HAP-1 (cell line): ENCODE measurements at regions of chr12 and their contacts with region 1.

Region 1: DNA sequence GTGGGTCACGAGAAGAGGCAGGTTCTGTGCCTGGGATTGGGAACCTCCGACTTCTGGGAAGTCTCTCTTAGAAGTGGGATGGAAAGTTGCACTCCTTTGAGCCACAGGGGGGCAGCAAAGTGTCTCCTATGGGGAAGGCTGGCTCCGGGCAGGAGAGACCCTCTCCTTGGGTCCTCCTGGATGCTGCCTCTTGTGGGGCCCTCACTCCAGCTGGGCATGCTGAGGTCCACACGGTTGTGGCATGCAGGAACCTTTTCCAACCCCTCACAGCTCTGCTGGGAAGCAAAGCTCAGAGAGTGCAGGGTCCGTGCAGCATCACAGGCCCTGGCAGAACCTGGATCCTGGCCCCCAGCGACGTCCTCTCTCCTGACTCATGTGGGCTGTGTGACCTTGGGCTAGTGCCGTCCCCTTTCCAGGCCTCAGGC is 17.4 kb downstream of the SDSL start:
- DNase-seq: peak; percentile 47 to 86
- H3K4me3 ChIP-seq: no peak overlapping the region
- H3K4me1 ChIP-seq: no peaks in the 10 kb centered on the region
- H3K27me3 ChIP-seq: no peaks in the 10 kb centered on the region

Region 2: DNA sequence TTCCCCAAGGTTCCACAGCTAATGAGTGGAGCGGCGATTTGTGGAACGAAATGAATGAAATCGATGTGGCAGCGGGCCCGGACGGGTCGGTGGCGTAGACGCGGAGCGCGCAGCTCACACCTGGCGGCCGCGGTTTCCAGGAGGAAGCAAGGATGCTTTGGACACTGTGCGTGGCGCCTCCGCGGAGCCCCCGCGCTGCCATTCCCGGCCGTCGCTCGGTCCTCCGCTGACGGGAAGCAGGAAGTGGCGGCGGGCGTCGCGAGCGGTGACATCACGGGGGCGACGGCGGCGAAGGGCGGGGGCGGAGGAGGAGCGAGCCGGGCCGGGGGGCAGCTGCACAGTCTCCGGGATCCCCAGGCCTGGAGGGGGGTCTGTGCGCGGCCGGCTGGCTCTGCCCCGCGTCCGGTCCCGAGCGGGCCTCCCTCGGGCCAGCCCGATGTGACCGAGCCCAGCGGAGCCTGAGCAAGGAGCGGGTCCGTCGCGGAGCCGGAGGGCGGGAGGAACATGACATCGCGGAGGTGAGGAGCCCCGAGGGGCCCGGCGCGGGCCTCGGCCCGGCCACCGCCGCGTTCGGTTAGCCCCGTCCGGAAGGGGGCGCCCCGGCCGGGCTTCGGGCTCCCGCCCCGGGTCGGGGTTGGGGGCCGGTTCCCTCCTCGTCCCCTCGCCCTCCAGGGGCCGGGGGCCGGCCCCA is 1020.9 kb before region 1 on chr12 and contains the start of gene PTPN11:
- in situ Hi-C with region 1: no loop called
- DNase-seq: peak; percentile 70 to 91
- H3K4me3 ChIP-seq: peak within 1 kb of the TSS; percentile 78
- H3K4me1 ChIP-seq: peaks cover 17% of the 10 kb centered on the region
- H3K27me3 ChIP-seq: no peaks in the 10 kb centered on the region

Region 3: DNA sequence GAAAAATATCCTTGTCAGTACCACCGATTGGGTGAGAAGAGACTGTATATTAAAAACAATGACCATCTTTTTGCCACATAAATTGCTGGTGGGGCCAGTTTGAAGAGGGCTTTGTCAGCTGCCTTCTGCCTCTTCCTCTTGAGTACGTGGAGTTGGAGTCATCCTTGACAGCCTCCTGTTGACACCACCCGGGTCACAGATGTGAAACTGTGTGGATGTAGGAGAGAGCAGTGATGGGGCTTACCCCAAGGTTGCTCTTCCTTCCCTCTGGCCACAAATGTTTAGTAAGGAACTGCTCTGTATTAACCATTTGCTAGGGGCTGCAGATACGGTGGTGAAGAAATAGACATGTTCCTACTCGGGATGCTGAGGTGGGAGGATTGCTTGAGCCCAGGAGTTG is 1008.7 kb before region 1 on chr12:
- in situ Hi-C with region 1: no loop called
- DNase-seq: no peak
- H3K4me3 ChIP-seq: no peak overlapping the region
- H3K4me1 ChIP-seq: no peaks in the 10 kb centered on the region
- H3K27me3 ChIP-seq: no peaks in the 10 kb centered on the region

Region 4: DNA sequence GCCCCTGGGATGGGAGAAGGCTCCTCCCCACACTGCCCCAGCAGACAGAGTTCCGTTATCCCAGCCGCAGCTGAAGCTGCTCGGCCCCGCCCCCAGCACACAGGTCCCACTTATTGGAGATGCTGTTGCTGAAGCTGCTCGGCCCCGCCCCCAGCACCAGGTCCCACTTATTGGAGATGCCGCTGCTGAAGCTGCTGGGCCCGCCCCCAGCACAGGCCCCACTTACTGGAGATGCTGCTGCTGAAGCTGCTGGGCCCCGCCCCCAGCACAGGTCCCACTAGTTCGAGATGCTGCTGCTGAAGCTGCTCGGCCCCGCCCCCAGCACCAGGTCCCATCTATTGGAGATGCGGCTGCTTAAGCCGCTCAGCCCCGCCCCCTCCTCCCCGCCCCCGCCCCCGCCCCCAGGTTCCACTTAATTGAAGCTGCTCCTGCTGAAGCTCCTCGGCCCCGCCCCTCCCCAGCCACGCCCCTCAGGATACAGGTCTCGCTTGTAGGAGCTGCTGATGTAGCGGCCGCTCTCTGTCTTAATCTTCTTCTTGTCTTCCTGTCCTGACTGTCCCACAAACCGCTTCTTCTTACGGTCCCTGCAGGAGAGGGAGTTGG is 278.1 kb before region 1 on chr12:
- in situ Hi-C with region 1: no loop called
- DNase-seq: peak; percentile 83 to 97
- H3K4me3 ChIP-seq: no peak overlapping the region
- H3K4me1 ChIP-seq: peaks cover 3% of the 10 kb centered on the region; the same call in 1 of the 2 replicates
- H3K27me3 ChIP-seq: no peaks in the 10 kb centered on the region

Region 5: GRCh38 chr12:113912760-113913329 is 473.2 kb after region 1 on chr12:
- in situ Hi-C with region 1: loop called (anchors 5 kb)
- DNase-seq: peak; percentile 67 to 87
- H3K4me3 ChIP-seq: no peak overlapping the region
- H3K4me1 ChIP-seq: no peaks in the 10 kb centered on the region
- H3K27me3 ChIP-seq: no peaks in the 10 kb centered on the region